A673 (cell line): ENCODE measurements at regions of chr6 and their contacts with region 1.

Region 1: GRCh38 chr6:157314705-157315321 is 8.5 kb downstream of the TMEM242 start:
- DNase-seq: peak; percentile 78
- H3K4me3 ChIP-seq: no peak overlapping the region
- H3K27ac ChIP-seq: no peak overlapping the region
- H3K4me1 ChIP-seq: no peaks in the 10 kb centered on the region
- H3K27me3 ChIP-seq: no peaks in the 10 kb centered on the region
- CTCF ChIP-seq: peak; percentile 88

Region 2: DNA sequence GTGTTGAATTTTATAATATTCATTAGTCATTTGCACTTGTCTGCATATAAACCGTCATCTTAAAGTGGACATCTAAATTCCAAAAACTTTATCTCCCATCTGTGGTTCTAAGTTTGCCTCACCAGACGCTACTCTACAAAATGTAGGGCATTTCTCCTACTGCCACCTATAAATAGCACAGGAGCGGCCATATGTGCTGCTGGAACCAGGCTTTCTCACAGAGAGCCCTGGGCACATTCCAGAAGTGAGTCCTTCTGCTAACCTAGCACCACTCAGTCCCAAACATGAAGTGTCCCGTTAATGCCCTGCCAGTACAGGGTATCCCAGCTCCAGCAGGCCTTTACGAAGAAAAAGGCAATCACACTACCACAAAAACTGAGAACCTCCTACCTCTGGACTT is 145.2 kb before region 1 on chr6:
- CTCF ChIA-PET with region 1: no interaction called
- POLR2A ChIA-PET with region 1: no interaction called
- intact Hi-C with region 1: no loop called
- DNase-seq: no peak
- H3K4me3 ChIP-seq: no peak overlapping the region
- H3K27ac ChIP-seq: no peak overlapping the region
- H3K4me1 ChIP-seq: no peaks in the 10 kb centered on the region
- H3K27me3 ChIP-seq: no peaks in the 10 kb centered on the region
- CTCF ChIP-seq: no peak

Region 3: DNA sequence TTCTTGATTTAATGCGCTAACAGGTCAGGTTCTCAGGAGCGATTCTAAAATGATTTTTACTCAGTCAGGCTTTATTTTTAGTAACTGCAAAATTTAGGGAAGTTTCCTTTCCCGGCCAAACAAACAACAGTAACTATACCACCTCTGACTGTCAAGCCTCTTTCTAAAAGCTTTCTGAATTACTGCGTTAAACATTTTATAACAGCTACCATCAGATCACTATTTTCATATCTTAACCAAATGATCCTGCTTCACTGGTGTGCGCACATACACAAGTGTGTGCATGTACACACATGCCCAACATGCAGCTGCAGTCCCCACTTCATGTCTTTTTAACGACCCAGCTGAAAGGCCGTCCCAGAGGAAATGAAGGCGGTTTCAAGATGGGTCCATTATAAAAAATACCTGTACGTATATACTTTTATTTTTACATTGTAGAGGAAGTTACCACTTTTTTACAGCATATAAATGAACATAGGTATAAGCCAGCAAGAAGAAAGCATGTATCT is 16.5 kb before region 1 on chr6:
- CTCF ChIA-PET with region 1: no interaction called
- POLR2A ChIA-PET with region 1: no interaction called
- intact Hi-C with region 1: no loop called
- DNase-seq: no peak
- H3K4me3 ChIP-seq: no peak overlapping the region
- H3K27ac ChIP-seq: no peak overlapping the region
- H3K4me1 ChIP-seq: no peaks in the 10 kb centered on the region
- H3K27me3 ChIP-seq: no peaks in the 10 kb centered on the region
- CTCF ChIP-seq: no peak

Region 4: DNA sequence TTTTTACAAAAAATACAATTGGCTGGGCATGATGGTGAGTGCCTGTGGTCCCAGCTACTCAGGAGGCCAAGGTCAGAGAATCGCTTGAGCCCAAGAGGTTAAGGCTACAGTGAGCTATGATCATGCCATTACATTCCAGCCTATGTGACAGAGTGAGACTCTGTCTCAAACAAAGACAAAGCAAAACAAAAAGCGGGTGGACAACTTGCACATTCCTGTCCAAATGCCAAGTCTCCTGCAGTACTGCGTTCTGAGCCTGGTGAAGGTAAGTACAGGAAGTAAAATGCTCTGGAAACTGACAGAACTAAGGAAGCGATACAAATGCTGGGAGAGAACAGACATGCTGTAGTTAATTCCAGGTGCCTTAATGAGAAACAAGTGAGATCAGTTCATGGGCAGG is 28.9 kb after region 1 on chr6:
- CTCF ChIA-PET with region 1: no interaction called
- POLR2A ChIA-PET with region 1: no interaction called
- intact Hi-C with region 1: no loop called
- DNase-seq: no peak
- H3K4me3 ChIP-seq: no peak overlapping the region
- H3K27ac ChIP-seq: no peak overlapping the region
- H3K4me1 ChIP-seq: no peaks in the 10 kb centered on the region
- H3K27me3 ChIP-seq: peaks cover 7% of the 10 kb centered on the region
- CTCF ChIP-seq: no peak

Region 5: GRCh38 chr6:157479464-157480303 is 164.9 kb after region 1 on chr6:
- CTCF ChIA-PET with region 1: no interaction called
- POLR2A ChIA-PET with region 1: no interaction called
- intact Hi-C with region 1: no loop called
- DNase-seq: no peak
- H3K4me3 ChIP-seq: no peak overlapping the region
- H3K27ac ChIP-seq: no peak overlapping the region
- H3K4me1 ChIP-seq: no peaks in the 10 kb centered on the region
- H3K27me3 ChIP-seq: no peaks in the 10 kb centered on the region
- CTCF ChIP-seq: no peak

Region 6: GRCh38 chr6:157597446-157598312 is 282.9 kb after region 1 on chr6:
- CTCF ChIA-PET with region 1: no interaction called
- POLR2A ChIA-PET with region 1: no interaction called
- intact Hi-C with region 1: loop called (anchors 1 kb)
- DNase-seq: peak; percentile 35
- H3K4me3 ChIP-seq: no peak overlapping the region
- H3K27ac ChIP-seq: no peak overlapping the region
- H3K4me1 ChIP-seq: no peaks in the 10 kb centered on the region
- H3K27me3 ChIP-seq: no peaks in the 10 kb centered on the region
- CTCF ChIP-seq: peak; percentile 62

Region 7: GRCh38 chr6:157667211-157668008 is 352.6 kb after region 1 on chr6:
- CTCF ChIA-PET with region 1: interaction called, 4 read pairs
- POLR2A ChIA-PET with region 1: no interaction called
- intact Hi-C with region 1: loop called (anchors 1 kb)
- DNase-seq: peak; percentile 73
- H3K4me3 ChIP-seq: no peak overlapping the region
- H3K27ac ChIP-seq: no peak overlapping the region
- H3K4me1 ChIP-seq: peaks cover 5% of the 10 kb centered on the region
- H3K27me3 ChIP-seq: no peaks in the 10 kb centered on the region
- CTCF ChIP-seq: peak; percentile 96